ENCODE measurements at regions of chr5 and their contacts with region 1.

Region 1: DNA sequence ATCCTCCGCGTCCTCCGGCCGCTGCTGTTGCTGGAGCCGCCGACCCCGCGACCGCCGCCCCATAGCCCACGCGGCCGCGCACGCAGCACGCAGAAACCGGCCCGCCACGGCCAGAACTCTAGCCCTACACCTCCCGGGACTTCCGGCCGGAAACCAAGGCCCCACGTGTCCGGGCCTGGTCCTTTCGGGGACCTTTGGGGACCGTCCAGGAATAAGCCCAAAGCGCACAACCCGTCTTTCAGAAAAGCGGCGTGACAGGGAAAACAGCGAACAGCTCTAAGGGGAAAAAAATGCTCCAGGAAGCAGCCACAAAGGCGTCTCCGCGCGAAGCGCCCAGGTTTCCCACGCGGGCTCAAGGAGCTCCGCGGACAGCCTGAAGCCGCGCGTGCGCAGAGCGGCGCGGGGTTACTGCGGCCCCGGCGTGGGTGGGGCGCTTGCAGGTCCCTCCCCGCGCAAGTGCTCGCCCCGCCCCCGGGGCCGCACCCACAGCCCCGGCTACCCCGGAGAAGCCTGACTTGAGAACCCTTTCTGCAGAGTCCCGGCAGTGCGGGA is at the starts of genes NSUN2 and SRD5A1:
- DNase-seq: peak; percentile 98
- ATAC-seq: peak; percentile 88
- H3K4me3 Mint-ChIP-seq: peak within 1 kb of the TSS; percentile 98
- H3K27ac Mint-ChIP-seq: peak within 1 kb of the TSS; percentile 92
- H3K4me1 Mint-ChIP-seq: peaks cover 32% of the 10 kb centered on the region
- H3K27me3 Mint-ChIP-seq: no peaks in the 10 kb centered on the region
- total RNA-seq, gene NSUN2: 75.0 to 78.2 TPM
- total RNA-seq, gene SRD5A1: 12.6 to 15.9 TPM

Region 2: DNA sequence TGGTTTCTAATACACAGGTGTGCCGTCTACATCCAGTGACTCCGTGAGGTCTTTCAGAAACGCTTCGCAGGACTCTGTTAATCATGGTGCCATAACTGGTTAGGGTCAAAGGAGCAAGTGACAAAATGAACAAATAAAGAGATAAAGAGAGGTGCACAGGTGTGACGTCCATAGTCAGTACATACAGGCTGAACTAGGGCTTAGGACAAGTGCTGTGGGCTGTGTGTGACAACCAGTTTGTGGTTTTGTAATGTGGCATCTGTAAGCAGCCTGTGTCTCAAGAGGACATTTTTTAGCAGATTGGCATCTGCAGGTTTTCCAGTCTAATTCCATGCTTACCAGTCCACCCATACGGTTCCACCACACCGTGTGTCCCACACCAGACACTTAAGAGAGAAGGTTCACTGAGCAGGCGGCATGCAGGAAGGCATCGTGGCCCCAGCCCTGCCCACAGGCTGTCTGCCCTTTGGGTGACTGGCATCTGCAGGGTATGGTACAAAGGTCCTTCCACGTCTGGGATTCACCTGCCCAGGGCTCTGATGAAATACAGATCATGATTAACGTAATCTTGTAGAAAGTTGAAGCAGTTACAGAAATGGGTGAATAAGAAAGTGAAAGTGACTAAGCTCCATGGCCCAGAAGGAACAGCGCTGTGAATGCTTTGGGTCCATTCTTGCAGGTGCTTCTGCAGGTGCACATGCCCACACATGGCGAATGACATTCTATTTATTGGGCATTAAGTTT is 27.1 kb after region 1 on chr5:
- POLR2A ChIA-PET with region 1: no interaction called
- DNase-seq: no peak
- ATAC-seq: no peak
- H3K4me3 Mint-ChIP-seq: no peak overlapping the region
- H3K27ac Mint-ChIP-seq: peak overlapping the region; percentile 57
- H3K4me1 Mint-ChIP-seq: peaks cover 8% of the 10 kb centered on the region
- H3K27me3 Mint-ChIP-seq: no peaks in the 10 kb centered on the region

Region 3: GRCh38 chr5:6712577-6713275 is 79.7 kb after region 1 on chr5:
- POLR2A ChIA-PET with region 1: interaction called, 22 read pairs
- DNase-seq: peak; percentile 99
- ATAC-seq: peak; percentile 78
- H3K4me3 Mint-ChIP-seq: peak overlapping the region; percentile 84
- H3K27ac Mint-ChIP-seq: peak overlapping the region; percentile 93
- H3K4me1 Mint-ChIP-seq: peaks cover 29% of the 10 kb centered on the region
- H3K27me3 Mint-ChIP-seq: peaks cover 2% of the 10 kb centered on the region

Region 4: DNA sequence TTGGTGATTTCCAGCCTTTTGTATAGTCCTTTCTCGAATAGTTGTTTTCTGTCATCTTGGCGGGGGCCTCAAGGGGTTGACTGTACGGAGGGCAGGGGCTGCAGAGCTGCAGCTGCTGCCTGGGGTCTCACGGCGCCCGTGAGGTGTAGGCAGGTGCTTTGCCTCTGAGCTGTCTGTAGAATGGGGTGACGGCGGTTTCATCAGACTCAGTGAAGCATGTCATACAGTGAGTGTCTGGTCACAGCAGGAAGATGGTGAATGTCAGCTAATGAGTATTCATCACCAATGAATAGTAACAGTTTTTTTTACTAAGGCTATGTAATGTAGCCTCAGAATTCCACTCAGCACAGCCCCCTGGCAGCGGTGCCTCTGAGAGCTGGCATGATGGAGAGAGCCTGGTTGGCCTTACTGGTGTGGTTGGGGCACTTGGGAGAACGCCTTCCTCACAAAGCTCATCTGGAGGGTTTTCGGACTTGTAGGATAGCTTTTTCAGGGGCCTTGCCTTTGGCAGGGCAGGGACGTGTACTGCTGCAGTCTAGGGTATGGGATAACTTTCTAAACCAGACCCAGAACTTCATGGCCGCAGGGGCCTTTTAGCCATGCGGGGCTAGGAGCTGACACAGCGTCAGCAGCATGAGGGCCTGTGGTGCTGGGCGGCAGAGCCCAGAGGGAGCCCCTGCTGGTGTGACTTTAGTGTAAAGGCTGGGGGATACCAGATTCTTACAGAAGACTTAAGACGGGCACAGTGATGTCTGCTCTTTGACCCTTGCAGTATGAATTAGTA is 95.2 kb after region 1 on chr5:
- POLR2A ChIA-PET with region 1: interaction called, 10 read pairs
- DNase-seq: no peak
- ATAC-seq: no peak
- H3K4me3 Mint-ChIP-seq: peak overlapping the region; percentile 4
- H3K27ac Mint-ChIP-seq: peak overlapping the region; percentile 40
- H3K4me1 Mint-ChIP-seq: peaks cover 62% of the 10 kb centered on the region
- H3K27me3 Mint-ChIP-seq: no peaks in the 10 kb centered on the region

Measured in activated naive CD8-positive, alpha-beta T cell treated with anti-CD3 and anti-CD28 coated beads, Interleukin-2, amount 10 ng/mL, durations not matched to agents 7 days and 5 days (primary cell).